ENCODE measurements at regions of chr22 and their contacts with region 1.

Region 1: DNA sequence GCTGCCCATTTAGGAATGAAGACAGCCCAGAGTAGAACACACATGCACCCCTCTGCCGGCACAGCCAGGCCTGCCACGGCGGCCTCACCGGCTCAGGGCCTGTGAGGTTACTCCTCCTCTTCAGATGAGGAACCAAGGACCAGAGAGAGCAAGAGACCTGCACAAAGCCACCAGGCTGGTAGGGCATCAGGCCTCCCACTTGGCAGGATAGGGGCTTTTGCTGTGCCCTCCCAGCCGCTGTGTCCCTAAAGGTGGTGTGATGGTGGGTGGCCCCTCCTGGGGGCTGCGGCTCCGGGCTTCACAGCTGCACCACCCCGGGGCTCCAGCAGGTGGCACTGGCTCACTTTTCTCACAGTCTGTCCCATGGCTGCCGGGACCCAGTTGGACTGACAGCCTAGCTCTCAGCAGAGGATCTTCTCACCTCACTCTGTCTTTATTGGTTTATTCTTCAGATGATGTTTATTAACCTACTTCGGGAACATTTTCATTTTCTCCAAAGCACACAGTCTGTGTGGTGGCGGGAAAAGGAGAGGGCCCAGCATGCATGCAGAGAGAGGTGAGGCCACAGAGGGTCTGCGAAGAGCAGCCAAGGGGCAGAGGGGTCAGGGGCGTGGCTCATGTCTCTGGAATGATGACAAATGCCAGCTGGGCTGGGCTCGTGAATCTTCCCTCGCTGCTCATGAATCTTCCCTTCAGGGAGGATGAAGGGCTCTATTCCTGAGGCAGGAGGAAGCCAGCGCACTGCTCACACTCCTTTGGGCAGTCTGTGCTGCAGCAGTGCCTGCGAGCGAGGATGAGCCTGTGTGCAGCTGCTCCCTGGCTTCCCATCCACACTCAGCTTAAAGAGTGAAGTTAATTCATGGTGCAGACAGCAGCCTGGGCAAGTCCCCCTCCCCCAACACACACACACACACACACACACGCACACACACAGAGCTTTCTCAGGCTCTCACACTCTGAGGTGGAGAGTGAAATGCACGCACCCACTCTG is 101.1 kb upstream of the PITPNB start:
- DNase-seq: no peak
- H3K4me3 ChIP-seq: peak overlapping the region; percentile 43
- CTCF ChIP-seq: peak; percentile 92

Region 2: GRCh38 chr22:27857443-27857842 is 162.7 kb before region 1 on chr22:
- CTCF ChIA-PET with region 1: no interaction called
- POLR2A ChIA-PET with region 1: no interaction called
- DNase-seq: no peak
- H3K4me3 ChIP-seq: no peak overlapping the region
- CTCF ChIP-seq: no peak

Region 3: DNA sequence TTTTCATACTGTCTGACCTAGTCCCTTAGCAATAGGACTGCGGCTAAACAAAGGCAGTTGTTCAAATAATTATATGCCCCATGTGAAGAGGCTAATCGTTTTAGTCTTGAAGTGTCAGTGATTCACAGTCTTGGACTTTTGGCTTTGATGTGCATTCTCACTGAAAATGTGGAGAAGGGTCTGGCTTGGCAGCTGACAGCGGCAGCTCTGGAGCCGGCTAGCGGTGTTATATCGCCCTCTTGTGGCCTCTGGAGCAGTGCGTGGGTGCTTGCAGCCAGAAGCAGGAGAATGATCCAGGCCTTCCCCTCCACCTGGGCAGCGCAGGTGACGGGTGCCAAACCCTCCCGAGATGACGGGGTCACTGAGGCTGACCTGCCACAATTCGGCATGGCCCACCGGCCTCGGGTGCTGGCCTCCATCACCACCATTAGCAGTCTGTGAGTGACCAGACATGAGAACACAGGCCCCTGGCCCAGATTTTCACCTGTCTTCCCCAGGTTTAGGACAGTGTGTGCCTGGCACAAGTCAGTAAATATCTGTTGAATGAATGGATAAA is 10.8 kb before region 1 on chr22:
- CTCF ChIA-PET with region 1: interaction called, 24 read pairs
- POLR2A ChIA-PET with region 1: no interaction called
- DNase-seq: peak; percentile 45
- H3K4me3 ChIP-seq: no peak overlapping the region
- CTCF ChIP-seq: peak; percentile 93

Region 4: DNA sequence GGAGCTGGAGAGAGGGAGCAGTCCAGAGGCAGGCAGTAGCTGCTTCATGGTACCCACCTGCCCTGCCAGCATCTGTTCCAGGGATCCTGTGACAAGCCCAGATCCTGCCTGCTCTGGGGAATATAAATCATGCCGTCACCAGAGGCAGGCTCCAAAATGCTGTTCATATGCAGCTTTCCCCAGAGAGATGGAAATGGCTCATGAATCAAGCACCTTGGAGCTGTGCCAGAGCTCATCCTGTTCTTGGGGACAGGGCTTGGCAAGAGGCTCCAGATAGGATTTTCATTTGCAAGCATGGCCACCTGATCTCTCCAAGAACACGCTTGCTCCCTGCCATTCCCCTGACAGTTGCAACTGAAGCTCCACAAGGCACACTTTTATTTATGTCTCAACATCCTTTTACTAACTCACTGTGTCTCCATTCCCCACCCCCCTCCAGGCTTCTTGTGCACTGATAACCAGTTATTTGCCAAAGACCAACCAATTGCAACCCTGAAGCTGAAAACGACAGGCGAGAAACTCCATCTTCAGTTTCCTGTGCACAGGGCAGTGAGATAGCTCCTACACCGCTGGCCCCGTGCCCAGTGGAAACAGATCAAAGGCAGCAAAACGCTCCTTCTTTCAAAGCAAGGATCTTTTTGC is 14.7 kb after region 1 on chr22:
- CTCF ChIA-PET with region 1: interaction called, 59 read pairs
- POLR2A ChIA-PET with region 1: no interaction called
- DNase-seq: no peak
- H3K4me3 ChIP-seq: no peak overlapping the region
- CTCF ChIP-seq: no peak

Region 5: GRCh38 chr22:28103596-28103995 is 83.4 kb after region 1 on chr22:
- CTCF ChIA-PET with region 1: no interaction called
- POLR2A ChIA-PET with region 1: no interaction called
- DNase-seq: no peak
- H3K4me3 ChIP-seq: no peak overlapping the region
- CTCF ChIP-seq: no peak

Region 6: DNA sequence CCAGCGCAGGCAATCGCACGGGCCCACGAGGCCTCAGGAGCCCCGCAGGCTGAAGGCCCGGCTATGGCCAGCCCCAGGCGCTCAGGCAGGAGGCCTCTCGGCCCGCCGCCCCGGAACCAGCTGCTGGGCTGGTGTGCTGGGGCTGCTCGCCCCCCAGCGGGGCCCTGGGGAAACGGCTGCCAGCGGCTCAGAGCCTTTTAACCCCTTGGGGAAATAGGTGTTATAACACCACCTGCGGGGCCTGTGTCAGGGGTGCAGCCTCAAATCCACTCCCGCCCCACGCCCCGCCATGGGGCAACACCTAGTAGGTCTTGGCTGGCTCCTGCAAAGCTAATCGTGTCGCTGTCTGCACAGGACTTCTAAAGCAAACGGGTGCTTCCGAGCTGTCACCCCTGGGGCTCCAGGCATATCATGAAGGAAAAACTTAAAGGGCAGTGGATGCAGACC is 422.1 kb after region 1 on chr22:
- CTCF ChIA-PET with region 1: interaction called, 28 read pairs
- POLR2A ChIA-PET with region 1: interaction called, 3 read pairs
- DNase-seq: no peak
- H3K4me3 ChIP-seq: peak overlapping the region; percentile 64
- CTCF ChIP-seq: peak; percentile 84

Region 7: GRCh38 chr22:28594797-28595462 is 574.8 kb after region 1 on chr22:
- CTCF ChIA-PET with region 1: interaction called, 77 read pairs
- POLR2A ChIA-PET with region 1: no interaction called
- DNase-seq: peak; percentile 31
- H3K4me3 ChIP-seq: no peak overlapping the region
- CTCF ChIP-seq: peak; percentile 44

Measured in AG04449 (cell line).